Caco-2 (cell line): ENCODE measurements at regions of chr5 and their contacts with region 1.

Region 1: DNA sequence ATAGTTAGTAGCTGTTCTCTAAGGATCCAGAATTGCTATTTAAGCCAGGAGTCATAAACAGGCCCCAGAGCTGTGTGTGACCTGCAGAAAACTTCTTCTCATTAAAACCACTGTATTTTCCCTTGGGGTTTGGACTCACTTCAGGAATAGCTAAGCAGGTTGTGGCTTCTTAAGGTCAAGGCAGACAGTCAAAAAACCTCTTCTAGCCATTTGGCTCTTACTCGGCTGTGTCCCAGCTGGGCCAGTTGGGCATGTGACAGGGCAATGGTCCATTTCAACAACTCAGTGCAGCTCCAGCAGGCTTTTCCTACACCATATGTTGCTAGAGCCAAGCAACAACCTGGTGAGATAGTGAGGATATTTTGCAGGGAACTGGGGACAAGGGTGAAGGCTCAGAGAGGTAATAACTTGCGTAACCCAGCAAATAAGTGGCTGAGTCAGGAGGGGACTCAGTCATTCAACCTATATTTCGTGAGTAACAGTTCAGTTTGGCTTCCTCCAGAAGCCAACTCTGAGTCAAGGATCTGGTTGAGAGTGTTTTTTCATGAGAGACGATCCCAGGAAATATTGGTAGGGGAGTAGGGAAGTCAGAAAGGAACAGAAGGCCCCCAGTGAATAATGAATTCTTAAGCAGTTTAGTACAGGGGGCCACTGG is 115.4 kb upstream of the PPP2R2B start:
- DNase-seq: no peak
- H3K4me3 ChIP-seq: no peak overlapping the region
- H3K4me3 Mint-ChIP-seq: no peak overlapping the region
- H3K27ac Mint-ChIP-seq: no peak overlapping the region
- H3K4me1 ChIP-seq: peaks cover 10% of the 10 kb centered on the region; the same call in 1 of the 2 replicates
- H3K4me1 Mint-ChIP-seq: peaks cover 7% of the 10 kb centered on the region
- H3K27me3 ChIP-seq: no peaks in the 10 kb centered on the region
- H3K27me3 Mint-ChIP-seq: no peaks in the 10 kb centered on the region
- CTCF ChIP-seq: no peak

Region 2: DNA sequence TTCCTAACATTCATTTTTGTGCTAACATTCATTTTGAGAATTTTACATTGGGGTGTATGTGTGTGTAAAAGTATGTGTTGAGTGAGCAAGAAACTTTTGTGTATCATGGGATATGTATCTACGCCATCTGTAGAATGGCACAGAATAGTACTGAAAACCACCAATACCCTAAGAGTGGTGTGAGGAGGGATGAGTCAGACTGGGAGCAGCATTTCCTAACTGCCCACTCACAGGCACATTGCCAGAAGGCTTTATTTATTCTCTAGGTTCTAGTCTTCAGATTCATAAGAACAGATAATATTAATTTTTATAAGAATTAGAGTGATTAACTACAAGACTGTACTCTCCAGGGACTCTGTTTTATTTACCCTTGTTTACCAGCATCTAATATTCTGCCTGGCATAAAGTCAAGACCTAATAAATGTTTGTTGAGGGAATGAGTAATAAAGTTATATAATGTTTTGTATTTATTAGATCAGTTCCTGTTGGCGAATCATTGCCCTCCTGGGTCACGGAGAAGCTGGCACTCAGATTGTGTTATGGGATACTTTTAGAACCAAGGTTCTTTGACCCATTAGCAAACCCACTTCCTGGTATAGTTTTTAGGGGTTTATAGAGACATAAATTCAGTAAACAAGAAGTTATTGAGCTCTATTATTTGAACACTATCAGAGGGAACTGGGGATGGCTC is 43.7 kb after region 1 on chr5:
- CTCF ChIA-PET with region 1: no interaction called
- POLR2A ChIA-PET with region 1: no interaction called
- intact Hi-C with region 1: loop called (anchors 2 kb)
- DNase-seq: no peak
- H3K4me3 ChIP-seq: no peak overlapping the region
- H3K4me3 Mint-ChIP-seq: no peak overlapping the region
- H3K27ac Mint-ChIP-seq: no peak overlapping the region
- H3K4me1 ChIP-seq: peaks cover 10% of the 10 kb centered on the region
- H3K4me1 Mint-ChIP-seq: peaks cover 14% of the 10 kb centered on the region
- H3K27me3 ChIP-seq: no peaks in the 10 kb centered on the region
- H3K27me3 Mint-ChIP-seq: no peaks in the 10 kb centered on the region
- CTCF ChIP-seq: no peak